Lower leg skin (tissue), 4 donors: ENCODE measurements at regions of chr9 and their contacts with region 1.

Region 1: DNA sequence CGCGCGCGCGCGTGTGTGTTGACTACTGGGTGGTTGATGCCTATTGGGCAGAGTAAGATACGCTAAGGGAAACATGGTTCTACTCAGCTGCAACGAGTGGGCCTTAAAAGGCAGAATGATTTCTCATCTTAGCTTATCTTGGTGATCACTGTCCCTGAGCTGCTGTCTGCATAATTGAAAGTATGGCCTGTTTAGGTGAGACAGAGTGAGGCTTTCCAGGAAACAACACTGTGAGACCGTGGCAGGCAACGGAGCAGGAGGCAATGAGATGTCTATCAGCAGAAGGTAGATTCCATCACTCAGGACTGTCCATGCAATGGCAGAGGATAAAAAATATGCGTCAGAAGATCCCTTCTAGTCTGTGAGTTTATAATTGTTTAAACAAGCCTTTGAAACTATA is 277.2 kb downstream of the TRIM32 start:
- DNase-seq: no peak
- H3K4me3 ChIP-seq: no peak overlapping the region
- CTCF ChIP-seq: no peak
- POLR2A ChIP-seq: no peak

Region 2: GRCh38 chr9:115845653-115846312 is 1118.5 kb before region 1 on chr9:
- intact Hi-C with region 1: no loop called
- DNase-seq: no peak
- H3K4me3 ChIP-seq: no peak overlapping the region
- CTCF ChIP-seq: no peak
- POLR2A ChIP-seq: no peak

Region 3: DNA sequence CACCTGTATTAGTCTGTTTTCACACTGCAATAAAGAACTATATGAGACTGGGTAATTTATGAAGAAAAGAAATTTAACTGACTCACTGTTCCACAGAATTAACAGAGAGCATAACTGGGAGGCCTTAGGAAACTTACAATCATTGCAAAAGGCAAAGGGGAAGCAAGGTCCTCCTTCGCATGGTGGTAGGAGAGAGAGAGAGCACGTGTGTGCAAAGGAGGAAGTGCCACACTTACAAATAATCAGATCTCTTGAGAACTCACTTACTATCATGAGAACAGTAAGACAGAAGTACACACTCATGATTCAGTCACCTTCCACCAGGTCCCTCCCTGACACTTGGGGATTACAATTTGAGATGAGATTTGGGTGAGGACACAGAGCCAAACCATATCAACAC is 18.4 kb before region 1 on chr9:
- intact Hi-C with region 1: loop called (anchors 2 kb)
- DNase-seq: no peak
- H3K4me3 ChIP-seq: no peak overlapping the region
- CTCF ChIP-seq: no peak
- POLR2A ChIP-seq: no peak